ENCODE measurements at regions of chr2 and their contacts with region 1.

Region 1: GRCh38 chr2:27191053-27191829 is 20.6 kb upstream of the ATRAID start:
- DNase-seq: peak in 12 of 14 experiments; percentile 10 to 71 (median 28)
- ATAC-seq: peak; percentile 86
- H3K4me3 ChIP-seq: no peak overlapping the region
- H3K4me3 Mint-ChIP-seq: no peak overlapping the region
- H3K27ac ChIP-seq: no peak overlapping the region
- H3K27ac Mint-ChIP-seq: no peak overlapping the region
- H3K4me1 ChIP-seq: no peaks in the 10 kb centered on the region
- H3K4me1 Mint-ChIP-seq: no peaks in the 10 kb centered on the region
- H3K27me3 ChIP-seq: peaks cover 3 to 10% of the 10 kb centered on the region in 2 experiments
- H3K27me3 Mint-ChIP-seq: peaks cover 7% of the 10 kb centered on the region
- CTCF ChIP-seq: peak; percentile 49

Region 2: GRCh38 chr2:26959331-26959730 is 231.9 kb before region 1 on chr2:
- CTCF ChIA-PET with region 1: interaction called, 7 read pairs
- POLR2A ChIA-PET with region 1: interaction called, 7 read pairs
- intact Hi-C with region 1: loop called (anchors 1 kb)
- DNase-seq: no peak
- ATAC-seq: no peak
- H3K4me3 ChIP-seq: no peak overlapping the region
- H3K4me3 Mint-ChIP-seq: no peak overlapping the region
- H3K27ac ChIP-seq: no peak overlapping the region
- H3K27ac Mint-ChIP-seq: no peak overlapping the region
- H3K4me1 ChIP-seq: peaks cover 5% of the 10 kb centered on the region
- H3K4me1 Mint-ChIP-seq: no peaks in the 10 kb centered on the region
- H3K27me3 ChIP-seq: peaks cover 7 to 10% of the 10 kb centered on the region in 2 experiments
- H3K27me3 Mint-ChIP-seq: peaks cover 54% of the 10 kb centered on the region
- CTCF ChIP-seq: no peak

Region 3: DNA sequence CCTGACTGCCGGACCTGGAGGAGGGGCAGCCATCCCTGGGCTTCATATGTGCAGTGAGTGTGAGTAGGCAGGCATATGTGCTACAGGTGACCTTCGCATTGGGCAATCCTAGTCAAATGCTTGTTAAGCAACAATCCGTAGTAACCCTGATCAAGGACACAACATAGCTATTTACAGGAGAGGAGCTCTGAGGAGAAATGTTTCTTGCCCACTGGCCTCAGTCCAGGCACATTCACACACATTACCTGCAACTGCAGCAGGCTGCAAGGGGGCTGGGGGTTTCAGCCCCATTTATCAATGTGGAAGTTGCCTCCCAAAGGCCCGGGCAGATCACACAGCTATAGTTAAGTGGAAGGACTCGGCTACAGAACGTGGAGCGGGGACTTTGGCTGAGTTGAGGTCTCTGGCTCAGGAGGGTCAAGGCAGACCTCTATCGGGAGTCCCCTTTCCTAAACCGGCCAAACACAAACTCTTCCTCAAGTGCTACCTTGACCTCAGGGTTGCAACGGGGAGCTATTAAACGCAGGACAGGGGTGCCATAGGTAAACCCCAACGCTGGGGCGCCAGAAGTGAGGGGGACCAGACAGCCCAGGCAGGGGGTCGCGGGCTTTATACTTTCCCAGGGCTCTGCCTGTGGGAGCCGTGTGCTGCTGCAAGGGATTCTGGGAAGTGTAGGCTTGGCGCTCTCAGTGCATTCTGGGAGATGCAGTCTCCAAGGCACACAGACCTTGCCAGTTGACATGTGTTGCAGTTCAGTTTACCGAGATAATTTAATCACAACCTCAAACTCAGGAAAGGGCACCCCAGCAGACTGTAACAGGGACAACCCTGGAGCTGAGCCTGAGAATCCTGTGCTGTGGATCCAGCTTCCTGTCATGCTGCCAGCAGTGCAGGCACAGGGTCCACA is 95.2 kb before region 1 on chr2:
- CTCF ChIA-PET with region 1: interaction called, 4 read pairs
- POLR2A ChIA-PET with region 1: no interaction called
- intact Hi-C with region 1: loop called (anchors 1 kb)
- DNase-seq: peak in 8 of 14 experiments; percentile 19 to 73 (median 46)
- ATAC-seq: peak; percentile 88
- H3K4me3 ChIP-seq: peak overlapping the region; percentile 23
- H3K4me3 Mint-ChIP-seq: peak overlapping the region; percentile 4
- H3K27ac ChIP-seq: no peak overlapping the region
- H3K27ac Mint-ChIP-seq: no peak overlapping the region
- H3K4me1 ChIP-seq: peaks cover 9% of the 10 kb centered on the region
- H3K4me1 Mint-ChIP-seq: peaks cover 11% of the 10 kb centered on the region
- H3K27me3 ChIP-seq: no peaks in the 10 kb centered on the region
- H3K27me3 Mint-ChIP-seq: no peaks in the 10 kb centered on the region
- CTCF ChIP-seq: no peak

Region 4: DNA sequence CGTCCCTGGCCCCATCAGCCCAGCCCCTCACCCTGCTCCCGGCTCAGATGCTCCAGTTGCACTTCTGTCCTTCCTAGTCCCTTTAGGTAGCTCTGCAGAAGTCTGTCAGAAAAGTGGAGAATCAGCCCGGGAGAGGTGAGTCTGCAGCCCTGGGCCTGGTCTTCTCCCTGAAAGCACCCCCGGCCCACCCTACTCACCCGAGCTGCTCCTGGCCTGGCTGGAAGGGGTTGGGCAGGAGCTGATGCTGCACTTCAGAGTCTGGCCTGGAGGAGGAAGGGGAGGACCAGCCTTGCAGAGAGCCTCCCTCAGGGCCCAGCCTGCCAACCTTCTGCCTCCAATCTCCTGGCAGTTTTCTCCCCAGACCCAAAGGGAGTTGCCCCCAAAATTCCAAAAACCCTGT is 88.9 kb before region 1 on chr2:
- CTCF ChIA-PET with region 1: interaction called, 4 read pairs
- POLR2A ChIA-PET with region 1: no interaction called
- intact Hi-C with region 1: loop called (anchors 1 kb)
- DNase-seq: no peak
- ATAC-seq: no peak
- H3K4me3 ChIP-seq: no peak overlapping the region
- H3K4me3 Mint-ChIP-seq: no peak overlapping the region
- H3K27ac ChIP-seq: no peak overlapping the region
- H3K27ac Mint-ChIP-seq: no peak overlapping the region
- H3K4me1 ChIP-seq: no peaks in the 10 kb centered on the region
- H3K4me1 Mint-ChIP-seq: no peaks in the 10 kb centered on the region
- H3K27me3 ChIP-seq: no peaks in the 10 kb centered on the region
- H3K27me3 Mint-ChIP-seq: peaks cover 10% of the 10 kb centered on the region
- CTCF ChIP-seq: no peak

Region 5: GRCh38 chr2:27152786-27153510 is 38.3 kb before region 1 on chr2:
- CTCF ChIA-PET with region 1: no interaction called
- POLR2A ChIA-PET with region 1: no interaction called
- intact Hi-C with region 1: loop called in 1 of 2 experiments (anchors 5 kb)
- DNase-seq: no peak
- ATAC-seq: no peak
- H3K4me3 ChIP-seq: no peak overlapping the region
- H3K4me3 Mint-ChIP-seq: no peak overlapping the region
- H3K27ac ChIP-seq: no peak overlapping the region
- H3K27ac Mint-ChIP-seq: no peak overlapping the region
- H3K4me1 ChIP-seq: no peaks in the 10 kb centered on the region
- H3K4me1 Mint-ChIP-seq: no peaks in the 10 kb centered on the region
- H3K27me3 ChIP-seq: peaks cover 0 to 3% of the 10 kb centered on the region in 2 experiments
- H3K27me3 Mint-ChIP-seq: peaks cover 4% of the 10 kb centered on the region
- CTCF ChIP-seq: no peak

Region 6: DNA sequence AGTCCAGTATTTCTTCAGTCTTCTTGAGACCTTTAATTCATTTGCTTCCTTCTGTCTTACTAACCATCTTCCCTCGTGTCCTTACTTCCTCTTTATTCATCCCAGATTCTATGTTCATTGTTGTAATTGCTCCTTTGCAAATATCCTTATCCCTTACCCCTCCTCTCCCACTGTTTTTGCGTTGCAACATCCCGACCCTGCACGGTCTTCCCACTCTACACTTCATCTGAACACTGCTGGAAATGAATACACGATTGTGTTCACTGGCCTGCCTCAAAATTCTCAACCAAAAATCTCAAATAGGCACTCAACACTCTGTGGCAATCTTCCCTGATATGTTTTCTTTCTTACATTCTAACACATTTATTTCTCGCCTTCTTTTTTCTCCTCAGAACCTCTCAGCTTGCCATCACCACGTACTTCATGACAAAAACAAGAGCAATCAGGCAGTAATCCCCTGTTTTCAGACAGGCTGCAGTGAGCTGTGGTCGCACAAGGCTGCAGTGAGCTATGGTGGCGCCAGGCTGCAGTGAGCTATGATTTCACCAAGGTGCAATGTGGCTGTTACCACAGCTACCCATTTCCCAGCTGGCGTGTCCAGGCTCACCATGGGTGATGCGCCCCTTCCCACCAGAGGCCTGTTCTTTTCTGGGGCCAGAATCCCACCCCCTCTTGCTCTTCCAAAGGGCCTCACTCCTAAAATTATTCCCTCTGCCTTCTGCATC is 16.8 kb before region 1 on chr2:
- CTCF ChIA-PET with region 1: interaction called, 6 read pairs
- POLR2A ChIA-PET with region 1: no interaction called
- intact Hi-C with region 1: loop called in 1 of 2 experiments (anchors 2 kb)
- DNase-seq: no peak
- ATAC-seq: no peak
- H3K4me3 ChIP-seq: no peak overlapping the region
- H3K4me3 Mint-ChIP-seq: no peak overlapping the region
- H3K27ac ChIP-seq: no peak overlapping the region
- H3K27ac Mint-ChIP-seq: no peak overlapping the region
- H3K4me1 ChIP-seq: peaks cover 8% of the 10 kb centered on the region
- H3K4me1 Mint-ChIP-seq: peaks cover 4% of the 10 kb centered on the region
- H3K27me3 ChIP-seq: peaks cover 3 to 7% of the 10 kb centered on the region in 2 experiments
- H3K27me3 Mint-ChIP-seq: peaks cover 44% of the 10 kb centered on the region
- CTCF ChIP-seq: no peak

Region 7: GRCh38 chr2:27202854-27203253 is 11.6 kb after region 1 on chr2:
- CTCF ChIA-PET with region 1: no interaction called
- POLR2A ChIA-PET with region 1: no interaction called
- intact Hi-C with region 1: no loop called
- DNase-seq: no peak
- ATAC-seq: no peak
- H3K4me3 ChIP-seq: no peak overlapping the region
- H3K4me3 Mint-ChIP-seq: no peak overlapping the region
- H3K27ac ChIP-seq: no peak overlapping the region
- H3K27ac Mint-ChIP-seq: no peak overlapping the region
- H3K4me1 ChIP-seq: peaks cover 10% of the 10 kb centered on the region
- H3K4me1 Mint-ChIP-seq: no peaks in the 10 kb centered on the region
- H3K27me3 ChIP-seq: no peaks in the 10 kb centered on the region
- H3K27me3 Mint-ChIP-seq: no peaks in the 10 kb centered on the region
- CTCF ChIP-seq: no peak